ENCODE measurements at regions of chr3 and their contacts with region 1.

Region 1: GRCh38 chr3:87167628-87168456 is 59.3 kb upstream of the CHMP2B start:
- DNase-seq: peak; percentile 31
- ATAC-seq: peak; percentile 61
- H3K4me3 ChIP-seq: peak overlapping the region in 1 of 3 experiments; percentile 17; a peak in 3 of 6 replicates
- H3K27ac ChIP-seq: no peak overlapping the region
- H3K4me1 ChIP-seq: peaks cover 4% of the 10 kb centered on the region; the same call in 1 of the 2 replicates
- H3K27me3 ChIP-seq: no peaks in the 10 kb centered on the region
- CTCF ChIP-seq: peak; percentile 68
- EP300 ChIP-seq: no peak
- POLR2A ChIP-seq: no peak
- RAD21 ChIP-seq: no peak

Region 2: DNA sequence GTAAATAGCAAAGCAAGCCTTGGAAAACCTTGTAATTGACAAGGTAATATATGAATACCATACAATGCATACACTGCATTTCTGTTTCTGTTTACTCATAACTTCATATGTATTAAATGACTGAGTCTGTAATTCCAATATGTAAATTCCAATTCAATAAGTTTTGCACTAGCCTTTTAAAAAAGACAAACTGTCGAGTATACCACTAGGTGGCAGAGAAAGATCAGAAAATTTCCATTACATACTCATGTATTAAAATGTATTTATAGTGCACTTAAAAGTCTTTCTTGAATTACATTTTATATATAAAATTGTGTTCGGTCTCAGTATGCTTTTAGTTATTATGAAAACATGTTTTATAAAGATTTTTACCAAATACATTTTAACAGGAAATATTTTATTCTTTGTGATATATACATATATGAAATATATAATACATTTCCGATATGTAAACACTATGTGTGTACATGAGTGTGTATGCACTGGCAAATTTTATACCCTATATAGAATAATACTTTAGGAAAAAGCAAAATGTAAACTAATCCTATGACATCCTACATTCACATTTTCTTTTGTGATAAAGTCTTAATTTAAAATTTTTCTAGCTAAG is 393.7 kb before region 1 on chr3:
- CTCF ChIA-PET with region 1: interaction called, 4 read pairs
- POLR2A ChIA-PET with region 1: no interaction called
- in situ Hi-C with region 1: loop called (anchors 10 kb)
- intact Hi-C with region 1: loop called (anchors 1 kb)
- DNase-seq: peak; percentile 9
- ATAC-seq: no peak
- H3K4me3 ChIP-seq: no peak overlapping the region
- H3K27ac ChIP-seq: no peak overlapping the region
- H3K4me1 ChIP-seq: no peaks in the 10 kb centered on the region
- H3K27me3 ChIP-seq: no peaks in the 10 kb centered on the region
- CTCF ChIP-seq: peak; percentile 41
- EP300 ChIP-seq: no peak
- POLR2A ChIP-seq: no peak
- RAD21 ChIP-seq: no peak

Region 3: DNA sequence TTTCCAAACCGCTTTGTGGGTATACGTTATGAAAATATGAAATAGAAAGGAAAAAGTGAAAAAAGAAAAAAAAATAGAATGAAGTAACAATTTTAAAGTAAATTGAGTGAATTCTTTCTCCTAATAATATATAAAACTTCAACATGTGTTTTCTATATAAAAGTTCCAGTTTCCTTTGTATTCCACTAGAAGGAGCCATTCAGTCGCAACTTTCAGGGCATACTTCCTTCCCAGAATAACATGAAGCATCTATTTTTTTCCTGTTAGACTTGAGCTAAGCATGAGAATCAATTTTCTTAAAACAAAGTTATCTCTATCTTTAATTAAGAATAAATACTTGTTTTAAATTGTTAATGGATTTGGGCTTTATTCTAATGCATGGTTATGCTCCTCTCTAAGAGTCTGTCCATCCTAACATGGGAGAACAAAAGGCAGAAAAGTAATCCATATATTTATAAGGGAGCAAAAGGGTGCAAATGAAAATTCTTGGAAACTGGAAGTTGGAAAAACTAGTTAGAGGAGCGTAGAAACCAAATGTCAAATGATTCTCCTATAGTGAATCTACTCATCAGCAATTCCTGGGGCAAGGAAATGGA is 160.9 kb before region 1 on chr3:
- CTCF ChIA-PET with region 1: no interaction called
- POLR2A ChIA-PET with region 1: no interaction called
- in situ Hi-C with region 1: no loop called
- intact Hi-C with region 1: loop called (anchors 1 kb)
- DNase-seq: no peak
- ATAC-seq: no peak
- H3K4me3 ChIP-seq: no peak overlapping the region
- H3K27ac ChIP-seq: no peak overlapping the region
- H3K4me1 ChIP-seq: no peaks in the 10 kb centered on the region
- H3K27me3 ChIP-seq: no peaks in the 10 kb centered on the region
- CTCF ChIP-seq: 0 out of 2 replicates have a peak, but pooled peaks have one; percentile 14
- EP300 ChIP-seq: no peak
- POLR2A ChIP-seq: no peak
- RAD21 ChIP-seq: no peak

Region 4: DNA sequence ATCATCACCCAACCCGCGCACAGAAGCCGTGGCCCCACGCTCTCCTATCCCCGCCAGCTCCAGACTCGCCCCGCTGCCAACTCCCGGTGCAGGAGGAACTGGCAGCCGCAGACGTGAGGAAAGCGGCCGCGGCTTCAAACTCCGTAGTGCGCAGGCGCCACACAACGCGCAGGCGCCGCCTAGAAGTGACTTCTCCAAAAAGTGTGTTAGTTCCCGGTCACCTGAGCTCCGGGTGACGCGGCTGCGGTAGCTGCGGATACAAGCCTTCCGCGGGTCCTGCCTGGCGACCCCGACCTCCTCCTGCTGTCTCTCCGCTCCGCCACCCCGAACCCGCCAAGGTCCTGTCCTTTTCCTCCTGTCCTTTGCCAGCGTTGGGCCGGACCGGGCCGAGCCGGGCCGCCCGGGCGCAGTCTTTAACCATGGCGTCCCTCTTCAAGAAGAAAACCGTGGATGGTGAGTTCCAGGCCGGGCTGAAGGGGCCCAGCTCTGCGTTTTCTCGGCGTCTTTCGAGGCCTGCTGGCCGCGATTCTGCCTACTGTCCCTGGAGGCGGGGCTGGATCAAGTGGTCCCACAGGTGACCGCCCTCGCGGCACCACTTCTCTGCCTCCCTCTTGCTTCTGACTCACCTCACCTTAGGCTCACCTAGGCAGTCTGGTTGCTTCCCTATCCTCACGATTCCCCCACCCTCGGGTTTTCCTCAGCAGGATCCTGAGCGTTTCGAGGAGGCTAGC is 59.4 kb after region 1 on chr3 and contains the start of gene CHMP2B:
- CTCF ChIA-PET with region 1: no interaction called
- POLR2A ChIA-PET with region 1: no interaction called
- in situ Hi-C with region 1: no loop called
- intact Hi-C with region 1: loop called (anchors 5 kb)
- DNase-seq: peak; percentile 81
- ATAC-seq: peak; percentile 97
- H3K4me3 ChIP-seq: peak within 1 kb of the TSS; percentile 78 to 97 (median 88)
- H3K27ac ChIP-seq: peak within 1 kb of the TSS; percentile 76
- H3K4me1 ChIP-seq: peaks cover 24% of the 10 kb centered on the region
- H3K27me3 ChIP-seq: no peaks in the 10 kb centered on the region; a peak in 1 of 5 replicates
- CTCF ChIP-seq: no peak
- EP300 ChIP-seq: no peak
- POLR2A ChIP-seq: peak; percentile 76 to 85
- RAD21 ChIP-seq: no peak
- total RNA-seq, gene CHMP2B: 33.5 and 47.3 TPM in 2 replicates

Measured in HepG2 (cell line).